HEK293 (cell line): ENCODE measurements at regions of chr10 and their contacts with region 1.

Region 1: GRCh38 chr10:72048450-72049124 is 39.8 kb downstream of the SPOCK2 start:
- H3K4me3 ChIP-seq: no peak overlapping the region
- H3K27ac ChIP-seq: no peak overlapping the region
- H3K4me1 ChIP-seq: no peaks in the 10 kb centered on the region
- CTCF ChIP-seq: peak; percentile 98

Region 2: GRCh38 chr10:71666639-71667386 is 381.8 kb before region 1 on chr10:
- CTCF ChIA-PET with region 1: no interaction called
- POLR2A ChIA-PET with region 1: no interaction called
- H3K4me3 ChIP-seq: no peak overlapping the region
- H3K27ac ChIP-seq: no peak overlapping the region
- H3K4me1 ChIP-seq: no peaks in the 10 kb centered on the region
- CTCF ChIP-seq: no peak

Region 3: DNA sequence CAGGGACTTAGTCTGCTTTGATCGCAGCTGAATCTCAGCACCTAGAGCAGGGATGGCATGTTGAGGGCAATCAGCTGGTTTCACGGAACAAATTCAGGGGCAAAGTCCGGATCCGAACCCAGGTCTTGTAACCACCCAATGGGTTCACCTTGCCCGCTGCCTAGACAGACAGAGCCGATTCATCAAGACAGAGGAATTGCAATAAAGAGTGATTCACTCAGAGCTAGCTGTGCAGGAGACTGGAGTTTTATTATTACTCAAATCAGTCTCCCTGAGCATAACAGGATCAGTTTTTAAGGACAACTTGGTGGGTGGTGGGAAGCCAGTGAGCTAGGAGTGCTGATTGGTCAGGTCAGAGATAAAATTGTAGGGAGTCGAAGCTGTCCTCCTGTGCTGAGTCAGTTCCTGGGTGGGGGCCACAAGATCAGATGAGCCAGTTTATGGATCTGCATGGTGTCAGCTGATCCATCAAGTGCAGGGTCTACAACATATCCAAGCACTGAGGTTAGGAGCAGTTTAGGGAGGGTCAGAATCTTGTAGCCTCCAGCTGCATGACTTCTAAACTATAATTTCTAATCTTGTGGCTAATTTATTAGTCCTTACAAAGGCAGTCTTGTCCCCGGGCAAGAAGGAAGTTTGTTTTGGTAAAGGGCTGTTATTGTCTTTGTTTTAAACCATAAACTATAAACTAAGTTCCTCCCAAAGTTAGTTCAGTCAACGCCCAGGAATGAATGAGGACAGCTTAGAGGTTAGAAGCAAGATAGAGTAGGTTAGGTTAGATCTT is 127.9 kb before region 1 on chr10:
- CTCF ChIA-PET with region 1: interaction called, 11 read pairs
- POLR2A ChIA-PET with region 1: no interaction called
- H3K4me3 ChIP-seq: no peak overlapping the region
- H3K27ac ChIP-seq: no peak overlapping the region
- H3K4me1 ChIP-seq: peaks cover 11% of the 10 kb centered on the region; the same call in 1 of the 2 replicates
- CTCF ChIP-seq: no peak

Region 4: DNA sequence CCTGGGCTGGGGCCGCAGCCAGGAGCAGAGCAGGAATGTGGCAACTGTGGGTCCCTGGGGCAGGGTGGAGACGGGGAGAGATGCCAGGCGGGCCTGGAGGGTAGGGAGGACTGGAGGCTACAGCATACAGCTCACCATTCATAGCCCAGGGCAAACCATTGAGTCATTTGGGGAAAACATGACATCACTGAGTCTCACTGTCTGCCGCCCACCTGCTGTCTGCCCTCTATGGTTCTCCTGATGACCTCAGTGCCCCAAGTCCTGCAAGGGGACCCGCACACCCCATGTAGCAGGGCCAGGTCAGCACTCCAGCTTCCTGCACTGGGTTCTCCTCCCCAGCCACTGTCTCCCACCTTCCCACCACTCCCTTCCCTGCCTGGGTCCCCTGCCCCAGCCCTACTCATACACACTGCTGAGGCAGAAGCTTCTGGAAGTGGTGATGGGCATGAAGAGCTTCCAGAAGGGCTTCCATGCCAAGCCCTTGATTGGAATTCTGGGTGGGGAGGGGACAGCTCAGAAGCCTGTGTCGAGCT is 74.0 kb before region 1 on chr10:
- CTCF ChIA-PET with region 1: interaction called, 12 read pairs
- POLR2A ChIA-PET with region 1: no interaction called
- H3K4me3 ChIP-seq: no peak overlapping the region
- H3K27ac ChIP-seq: no peak overlapping the region
- H3K4me1 ChIP-seq: peaks cover 3% of the 10 kb centered on the region
- CTCF ChIP-seq: no peak

Region 5: DNA sequence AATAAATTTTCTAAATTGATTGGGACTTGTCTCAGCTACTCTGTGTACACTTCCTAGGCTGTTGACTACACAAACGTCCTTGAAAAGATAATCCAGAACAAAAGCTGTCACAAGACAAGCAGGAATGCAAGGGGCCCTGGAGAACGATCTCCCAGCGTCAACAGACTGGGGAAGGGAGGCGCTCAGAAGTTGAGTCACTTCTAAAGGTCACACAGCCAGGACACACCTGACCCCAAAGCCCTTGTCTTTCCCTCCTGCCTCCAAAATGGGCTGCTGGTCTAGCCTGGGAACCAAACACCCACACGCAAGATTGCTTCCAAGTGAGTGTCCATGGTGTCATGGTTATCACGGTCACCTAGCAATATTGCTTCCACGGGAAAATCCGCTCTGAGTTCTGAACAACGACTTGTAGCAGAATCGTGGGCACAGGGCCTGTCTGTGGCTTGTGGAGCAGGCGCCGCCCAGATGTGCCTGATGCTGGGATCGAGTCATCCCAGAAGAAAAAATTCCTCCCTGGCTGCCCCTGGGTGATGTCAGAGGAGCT is 10.1 kb before region 1 on chr10:
- CTCF ChIA-PET with region 1: interaction called, 25 read pairs
- POLR2A ChIA-PET with region 1: no interaction called
- H3K4me3 ChIP-seq: no peak overlapping the region
- H3K27ac ChIP-seq: no peak overlapping the region
- H3K4me1 ChIP-seq: no peaks in the 10 kb centered on the region
- CTCF ChIP-seq: no peak

Region 6: GRCh38 chr10:72146071-72146470 is 97.5 kb after region 1 on chr10:
- CTCF ChIA-PET with region 1: no interaction called
- POLR2A ChIA-PET with region 1: no interaction called
- H3K4me3 ChIP-seq: no peak overlapping the region
- H3K27ac ChIP-seq: no peak overlapping the region
- H3K4me1 ChIP-seq: peaks cover 4% of the 10 kb centered on the region
- CTCF ChIP-seq: no peak

Region 7: DNA sequence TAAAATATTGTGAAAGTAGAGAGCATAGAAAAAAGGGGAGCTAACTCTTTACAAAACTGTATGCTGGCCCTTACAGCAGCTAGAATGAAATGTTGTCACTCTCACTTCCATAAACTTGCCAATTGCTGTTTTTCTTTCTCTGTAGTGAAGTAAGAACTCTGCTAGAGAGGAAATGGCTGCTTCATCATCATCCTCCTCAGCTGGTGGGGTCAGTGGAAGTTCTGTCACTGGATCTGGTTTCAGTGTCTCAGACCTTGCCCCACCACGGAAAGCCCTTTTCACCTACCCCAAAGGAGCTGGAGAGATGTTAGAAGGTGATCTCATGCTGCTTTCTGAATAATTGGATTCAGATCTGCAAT is 175.1 kb after region 1 on chr10:
- CTCF ChIA-PET with region 1: interaction called, 19 read pairs
- POLR2A ChIA-PET with region 1: no interaction called
- H3K4me3 ChIP-seq: no peak overlapping the region
- H3K27ac ChIP-seq: no peak overlapping the region
- H3K4me1 ChIP-seq: peaks cover 10% of the 10 kb centered on the region
- CTCF ChIP-seq: no peak